ENCODE measurements at regions of chr14 and their contacts with region 1.

Region 1: GRCh38 chr14:95774265-95775160 is 60.6 kb upstream of the TCL1A start:
- DNase-seq: peak; percentile 76
- ATAC-seq: peak; percentile 51
- H3K4me3 Mint-ChIP-seq: no peak overlapping the region
- H3K27ac Mint-ChIP-seq: no peak overlapping the region
- H3K4me1 Mint-ChIP-seq: peaks cover 10% of the 10 kb centered on the region
- H3K27me3 Mint-ChIP-seq: peaks cover 32% of the 10 kb centered on the region
- CTCF ChIP-seq: peak; percentile 97

Region 2: GRCh38 chr14:95725685-95726336 is 48.7 kb before region 1 on chr14:
- CTCF ChIA-PET with region 1: interaction called, 10 read pairs
- POLR2A ChIA-PET with region 1: no interaction called
- DNase-seq: no peak
- ATAC-seq: no peak
- H3K4me3 Mint-ChIP-seq: no peak overlapping the region
- H3K27ac Mint-ChIP-seq: no peak overlapping the region
- H3K4me1 Mint-ChIP-seq: peaks cover 4% of the 10 kb centered on the region
- H3K27me3 Mint-ChIP-seq: peaks cover 18% of the 10 kb centered on the region
- CTCF ChIP-seq: no peak

Region 3: GRCh38 chr14:95876761-95877538 is 102.4 kb after region 1 on chr14 and contains the start of gene TUNAR:
- CTCF ChIA-PET with region 1: interaction called, 10 read pairs
- POLR2A ChIA-PET with region 1: no interaction called
- DNase-seq: peak; percentile 72
- ATAC-seq: peak; percentile 49
- H3K4me3 Mint-ChIP-seq: peak within 1 kb of the TSS; percentile 76
- H3K27ac Mint-ChIP-seq: peak within 1 kb of the TSS; percentile 15; the same call in 1 of the 2 replicates
- H3K4me1 Mint-ChIP-seq: peaks cover 61% of the 10 kb centered on the region
- H3K27me3 Mint-ChIP-seq: peaks cover 14% of the 10 kb centered on the region
- CTCF ChIP-seq: no peak
- total RNA-seq, gene TUNAR: 36.3 to 57.6 TPM (median 57.0 TPM) in 3 replicates

Region 4: DNA sequence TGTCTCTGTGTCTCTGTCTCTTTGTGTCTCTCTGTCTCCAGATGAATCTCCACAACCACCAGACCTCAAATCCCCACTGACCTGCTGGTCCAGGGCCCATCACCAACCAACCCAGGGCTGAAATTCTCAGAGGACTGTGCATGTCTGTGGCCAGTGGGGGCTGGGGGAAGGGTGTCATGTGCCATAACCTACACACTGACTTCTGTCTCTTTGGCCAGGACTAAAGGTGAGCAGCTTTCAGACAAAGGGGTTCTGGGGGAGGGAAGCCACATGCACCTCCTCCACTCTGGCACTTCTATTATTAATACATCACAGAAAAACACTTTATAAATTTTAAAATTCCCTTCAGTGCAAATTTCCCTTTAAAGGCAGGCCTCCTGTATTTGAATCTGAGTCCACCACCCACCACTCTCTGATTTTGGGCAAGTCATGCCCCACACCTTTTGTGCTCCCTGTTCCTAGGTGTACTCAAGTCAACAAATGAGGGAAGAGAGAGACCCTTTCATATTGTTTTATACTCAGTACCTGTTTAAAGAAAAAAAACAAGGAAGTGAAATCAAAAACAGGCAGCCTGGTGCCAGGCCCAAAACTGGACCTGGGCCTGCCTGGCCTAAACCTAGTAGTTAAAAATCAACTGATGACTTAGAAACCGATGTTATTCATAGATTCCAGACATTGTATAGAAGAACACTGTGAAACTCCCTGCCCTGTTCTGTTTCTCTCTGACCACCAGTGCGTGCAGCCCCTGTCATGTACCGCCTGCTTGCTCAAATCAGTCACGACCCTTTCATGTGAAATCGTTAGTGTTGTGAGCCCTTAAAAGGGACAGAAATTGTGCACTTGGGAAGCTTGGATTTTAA is 182.3 kb after region 1 on chr14:
- CTCF ChIA-PET with region 1: no interaction called
- POLR2A ChIA-PET with region 1: no interaction called
- DNase-seq: no peak
- ATAC-seq: no peak
- H3K4me3 Mint-ChIP-seq: no peak overlapping the region
- H3K27ac Mint-ChIP-seq: peak overlapping the region; percentile 98
- H3K4me1 Mint-ChIP-seq: peaks cover 74% of the 10 kb centered on the region
- H3K27me3 Mint-ChIP-seq: peaks cover 3% of the 10 kb centered on the region
- CTCF ChIP-seq: no peak